ENCODE measurements at regions of chr1 and their contacts with region 1.

Region 1: DNA sequence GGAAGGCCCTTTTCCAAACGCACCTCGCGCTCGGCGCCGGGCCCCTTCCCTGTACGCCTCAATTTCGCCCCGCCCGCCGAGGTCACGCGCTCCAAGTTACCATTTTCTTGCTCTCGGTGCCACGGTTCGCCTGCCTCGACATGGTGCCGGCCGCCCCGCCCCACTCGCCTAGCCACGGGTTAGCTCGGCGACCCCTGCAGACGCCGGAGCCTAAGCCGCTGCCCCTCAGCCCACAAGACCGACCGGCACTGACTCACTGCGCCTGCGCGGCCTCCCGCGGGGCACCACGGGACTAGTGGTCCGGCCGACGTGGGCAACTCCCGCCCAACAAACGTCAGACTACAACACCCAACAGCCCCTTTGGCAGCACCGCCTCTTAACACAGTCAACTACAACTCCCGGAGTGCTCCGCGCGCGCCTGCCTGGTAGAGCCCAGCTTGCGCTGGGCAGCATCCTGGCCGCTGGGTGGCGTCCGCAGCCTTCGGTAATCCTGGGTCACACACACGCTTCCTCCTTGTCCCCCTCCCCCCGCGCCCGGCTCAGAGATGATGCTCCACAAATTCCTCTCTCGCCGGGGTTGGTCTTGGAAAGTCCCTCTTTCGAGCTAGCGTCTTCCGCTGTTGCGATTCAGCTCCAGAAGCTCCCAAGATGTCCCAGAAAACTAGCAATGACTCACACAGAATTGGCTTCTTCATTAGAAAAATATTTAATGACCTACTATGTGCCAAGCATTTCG is at the start of gene TRAPPC3:
- DNase-seq: peak; percentile 99
- H3K4me3 ChIP-seq: peak within 1 kb of the TSS; percentile 97
- H3K27me3 ChIP-seq: no peaks in the 10 kb centered on the region
- CTCF ChIP-seq: peak; percentile 96
- polyA plus RNA-seq, gene TRAPPC3: 65.4 and 95.8 TPM in 2 replicates

Region 2: DNA sequence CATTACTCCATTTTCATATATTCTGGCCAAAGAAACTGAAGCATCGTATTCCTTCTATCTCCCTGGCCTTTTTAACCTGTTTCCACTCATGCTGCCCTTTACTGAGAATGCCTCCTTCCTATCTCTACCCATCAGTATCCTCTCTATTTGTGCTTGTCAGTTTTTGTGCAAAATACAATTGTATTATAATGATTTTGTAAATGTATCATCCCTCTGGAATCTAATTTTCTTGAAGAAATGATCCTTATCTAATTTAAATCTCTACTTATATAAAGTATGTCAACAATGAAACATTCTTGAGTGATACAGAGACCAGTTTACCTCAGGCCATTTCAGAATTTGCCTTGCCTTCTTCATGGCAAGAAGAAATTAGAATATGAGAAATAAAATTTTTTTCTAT is 124.6 kb before region 1 on chr1:
- CTCF ChIA-PET with region 1: no interaction called
- POLR2A ChIA-PET with region 1: no interaction called
- DNase-seq: no peak
- H3K4me3 ChIP-seq: no peak overlapping the region
- H3K27me3 ChIP-seq: no peaks in the 10 kb centered on the region
- CTCF ChIP-seq: no peak

Region 3: DNA sequence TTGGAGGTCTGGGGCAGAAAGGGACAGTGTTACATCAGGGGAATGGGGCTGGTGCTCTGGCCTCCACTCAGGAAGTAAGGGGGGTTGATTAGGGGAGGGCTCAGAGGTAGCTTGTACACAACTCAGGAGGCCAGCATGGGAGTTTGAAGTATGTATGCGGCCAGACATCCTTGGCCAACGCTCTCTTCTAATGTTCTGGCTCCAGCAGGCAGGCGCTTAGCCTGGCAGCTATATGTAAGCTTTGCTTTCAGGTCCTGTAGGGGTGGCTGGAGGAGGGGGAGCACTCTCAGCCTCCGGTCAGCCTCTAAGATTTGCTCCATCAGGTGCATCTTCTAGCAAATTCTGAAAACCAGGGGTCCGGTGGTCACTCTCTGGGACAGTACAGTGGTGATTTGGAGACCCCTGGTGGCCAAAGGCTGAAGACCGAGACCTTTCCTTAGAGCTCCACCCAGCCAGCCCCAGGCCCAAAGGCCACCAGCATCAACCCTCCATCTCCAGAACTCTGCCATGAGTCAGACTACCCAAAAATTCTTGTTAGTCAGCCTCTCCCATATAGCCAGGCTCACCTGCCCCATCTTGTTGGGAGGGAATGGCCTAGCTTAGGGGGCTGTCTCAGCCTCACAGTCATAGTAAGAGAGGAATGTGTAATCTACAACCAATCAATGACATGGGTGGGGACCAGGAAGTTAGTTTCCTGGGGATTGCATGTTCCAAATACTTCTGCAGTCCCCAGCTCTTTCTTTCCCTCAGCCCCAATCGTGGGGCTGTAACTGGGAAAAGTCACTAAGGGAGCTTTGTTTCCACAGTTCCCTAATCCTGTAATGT is 14.7 kb before region 1 on chr1:
- CTCF ChIA-PET with region 1: interaction called, 72 read pairs
- POLR2A ChIA-PET with region 1: interaction called, 5 read pairs
- DNase-seq: no peak
- H3K4me3 ChIP-seq: no peak overlapping the region
- H3K27me3 ChIP-seq: no peaks in the 10 kb centered on the region
- CTCF ChIP-seq: peak; percentile 79

Region 4: DNA sequence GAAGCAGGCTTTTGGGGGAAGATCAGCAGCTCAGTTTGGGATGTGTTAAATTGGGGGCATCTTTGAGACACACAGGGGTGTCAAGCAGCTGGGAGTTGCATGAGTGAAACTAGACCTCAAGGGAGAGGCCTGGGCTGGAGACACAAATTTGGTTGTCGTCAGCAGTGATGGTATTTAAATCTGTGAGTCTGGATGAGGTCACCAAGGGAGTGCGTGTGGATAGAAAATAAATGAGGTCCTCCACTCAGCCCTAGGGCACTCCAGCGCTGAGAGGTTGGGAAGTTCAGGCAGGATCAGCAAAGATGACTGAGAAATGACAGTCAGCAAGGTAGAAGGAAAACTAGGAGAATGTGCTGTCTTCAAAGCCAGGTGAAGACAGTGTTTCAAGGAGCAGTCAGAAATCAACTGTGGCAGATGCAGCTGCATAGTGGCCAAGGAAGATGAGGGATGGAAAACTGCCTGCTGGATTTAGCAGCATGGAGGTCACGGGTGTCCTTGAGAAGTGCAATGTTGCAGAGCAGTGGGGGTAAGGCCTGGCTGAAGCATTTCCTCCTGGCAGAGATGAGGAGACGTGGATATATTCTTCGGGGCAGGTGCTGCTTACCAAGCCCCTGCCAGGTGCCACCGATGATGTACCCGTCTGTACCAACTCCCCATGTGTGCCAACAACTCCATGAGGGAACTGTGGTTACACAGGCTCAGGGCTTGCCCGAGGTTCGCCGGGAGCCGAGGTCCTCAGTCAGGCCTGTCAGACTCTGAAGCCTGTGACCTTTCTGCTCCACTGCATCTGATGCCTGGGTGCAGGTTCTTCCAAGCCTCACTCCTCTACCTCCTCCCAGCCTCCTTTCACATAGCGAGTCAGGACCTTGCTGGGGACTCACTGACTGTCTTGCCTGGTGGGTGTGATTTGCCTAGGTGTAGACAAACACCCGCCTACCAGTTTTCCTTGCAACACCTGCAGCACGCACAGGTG is 17.8 kb after region 1 on chr1:
- CTCF ChIA-PET with region 1: interaction called, 33 read pairs
- POLR2A ChIA-PET with region 1: no interaction called
- DNase-seq: no peak
- H3K4me3 ChIP-seq: no peak overlapping the region
- H3K27me3 ChIP-seq: no peaks in the 10 kb centered on the region
- CTCF ChIP-seq: no peak

Region 5: DNA sequence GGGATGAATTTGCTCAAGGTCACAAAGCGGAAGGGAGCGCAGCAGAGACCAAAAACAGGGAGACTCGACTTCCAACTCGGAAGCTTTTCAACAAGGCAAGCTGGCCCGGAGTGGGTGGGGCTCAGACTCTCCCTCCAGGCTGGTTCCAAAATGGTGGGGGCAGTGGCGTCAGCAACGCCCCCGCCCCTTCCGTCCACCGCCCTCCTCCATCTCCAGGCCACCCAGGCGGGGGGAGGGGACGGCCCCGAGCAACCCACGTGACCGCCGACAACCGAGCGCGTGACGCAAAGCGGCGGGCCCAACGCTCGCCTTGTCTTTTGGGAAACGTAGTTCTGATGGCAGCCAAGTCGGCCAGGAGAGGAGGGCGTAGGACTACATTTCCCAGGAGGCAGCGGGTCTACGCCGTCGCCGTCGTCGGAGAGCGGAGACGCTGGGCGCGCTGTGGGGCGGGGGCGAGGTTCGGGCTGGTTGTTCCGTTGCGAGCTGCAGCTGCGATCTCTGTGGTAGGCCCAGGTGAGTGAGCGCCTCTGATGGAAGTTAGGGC is 74.7 kb after region 1 on chr1 and contains the start of gene THRAP3:
- CTCF ChIA-PET with region 1: interaction called, 10 read pairs
- POLR2A ChIA-PET with region 1: interaction called, 7 read pairs
- DNase-seq: peak; percentile 96
- H3K4me3 ChIP-seq: peak within 1 kb of the TSS; percentile 85
- H3K27me3 ChIP-seq: no peaks in the 10 kb centered on the region
- CTCF ChIP-seq: no peak
- polyA plus RNA-seq, gene THRAP3: 45.8 and 69.0 TPM in 2 replicates

Region 6: DNA sequence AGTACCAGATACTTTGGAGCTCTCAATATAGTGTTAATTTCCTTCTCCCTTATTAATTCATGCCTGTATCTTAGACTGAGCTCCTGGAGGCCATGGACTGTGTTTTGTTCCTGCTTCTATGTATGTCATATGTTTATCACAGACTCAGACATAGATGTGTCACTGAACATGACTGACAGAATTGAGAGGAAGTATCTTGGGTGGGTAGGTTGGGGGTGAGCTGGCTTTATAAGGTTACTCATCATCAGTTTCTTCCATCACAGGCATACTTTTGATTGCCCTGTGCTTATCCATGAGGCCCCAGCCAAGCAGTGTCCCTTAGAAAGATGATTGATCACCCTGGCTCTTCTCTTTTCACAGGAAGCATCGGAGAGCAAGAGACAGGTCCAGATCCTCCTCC is 151.1 kb after region 1 on chr1:
- CTCF ChIA-PET with region 1: interaction called, 14 read pairs
- POLR2A ChIA-PET with region 1: no interaction called
- DNase-seq: no peak
- H3K4me3 ChIP-seq: no peak overlapping the region
- H3K27me3 ChIP-seq: no peaks in the 10 kb centered on the region
- CTCF ChIP-seq: no peak

Measured in BJ (cell line).